ENCODE measurements at regions of chr3 and their contacts with region 1.

Region 1: DNA sequence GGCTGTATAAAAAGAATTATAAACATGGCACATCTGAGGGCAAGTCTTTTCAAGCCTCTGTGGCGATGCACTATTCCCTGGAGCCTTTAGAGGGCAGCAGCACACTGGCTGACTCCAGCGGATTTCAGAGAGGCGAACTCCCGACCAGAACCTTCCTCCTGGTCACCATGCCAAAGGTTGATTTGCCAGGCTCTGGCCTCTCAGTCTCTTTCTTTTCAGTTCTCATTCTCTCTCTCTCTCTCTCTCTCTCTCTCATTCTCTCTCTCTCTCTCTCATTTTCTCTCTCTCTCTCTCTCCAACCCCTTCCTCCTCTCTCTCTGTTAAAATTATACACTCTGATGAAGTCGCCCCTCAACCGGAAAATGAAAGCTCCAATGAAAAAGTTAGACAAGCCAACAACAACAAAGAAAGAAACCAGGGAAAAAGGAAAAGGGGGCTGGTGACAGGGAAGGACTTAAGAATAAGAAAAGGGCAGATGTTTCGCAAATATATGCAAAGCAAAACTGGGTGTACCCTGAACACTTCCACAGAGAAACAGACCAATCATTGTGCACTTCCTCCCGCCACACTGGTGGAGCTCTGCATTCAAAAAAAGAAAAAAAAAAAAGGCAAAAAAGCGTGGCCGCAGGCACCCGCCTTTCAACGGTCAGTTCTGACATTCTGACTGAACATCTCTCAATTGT is 90.2 kb downstream of the TIGIT start:
- DNase-seq: peak; percentile 25
- ATAC-seq: peak; percentile 99
- H3K4me3 ChIP-seq: no peak overlapping the region
- H3K27ac ChIP-seq: no peak overlapping the region
- H3K4me1 ChIP-seq: 0 out of 2 replicates have a peak, but pooled peaks cover under 1% of the 10 kb centered on the region
- H3K27me3 ChIP-seq: no peaks in the 10 kb centered on the region
- CTCF ChIP-seq: peak; percentile 93 to 95 (median 93)
- EP300 ChIP-seq: no peak
- POLR2A ChIP-seq: no peak
- RAD21 ChIP-seq: peak; percentile 98

Region 2: DNA sequence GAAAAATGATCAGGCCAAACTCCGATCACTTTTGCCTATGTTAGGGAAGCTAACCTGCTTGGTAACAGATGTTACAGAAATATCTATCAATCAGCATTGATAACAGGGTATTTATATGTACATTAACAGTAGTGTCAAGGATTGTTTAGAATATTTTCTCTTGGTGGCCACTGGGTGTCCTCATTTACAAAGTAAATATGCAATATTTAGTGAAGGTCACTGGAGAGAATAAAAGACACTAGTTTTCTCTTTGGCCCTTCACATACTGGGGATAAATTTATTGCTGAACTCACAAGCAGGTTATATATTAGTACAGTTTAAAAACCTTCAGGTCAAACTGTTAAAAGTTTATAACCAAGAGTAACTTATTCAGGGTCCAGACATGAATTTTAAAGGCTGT is 21.2 kb before region 1 on chr3:
- CTCF ChIA-PET with region 1: interaction called, 4 read pairs
- POLR2A ChIA-PET with region 1: no interaction called
- RAD21 ChIA-PET with region 1: no interaction called
- SMC1A ChIA-PET with region 1: interaction called, 14 read pairs
- in situ Hi-C with region 1: no loop called
- intact Hi-C with region 1: no loop called
- DNase-seq: no peak
- ATAC-seq: peak; percentile 87
- H3K4me3 ChIP-seq: no peak overlapping the region
- H3K27ac ChIP-seq: no peak overlapping the region
- H3K4me1 ChIP-seq: no peaks in the 10 kb centered on the region
- H3K27me3 ChIP-seq: no peaks in the 10 kb centered on the region
- CTCF ChIP-seq: peak in 2 of 3 experiments; percentile 37 to 51; a peak in 4 of 6 replicates
- EP300 ChIP-seq: no peak
- POLR2A ChIP-seq: no peak
- RAD21 ChIP-seq: peak; percentile 57

Region 3: GRCh38 chr3:114418724-114419543 is 34.9 kb after region 1 on chr3:
- CTCF ChIA-PET with region 1: interaction called, 223 read pairs
- POLR2A ChIA-PET with region 1: interaction called, 3 read pairs
- RAD21 ChIA-PET with region 1: interaction called, 38 read pairs
- SMC1A ChIA-PET with region 1: interaction called, 75 read pairs
- in situ Hi-C with region 1: no loop called
- intact Hi-C with region 1: loop called (anchors 1 kb)
- DNase-seq: no peak
- ATAC-seq: peak; percentile 96
- H3K4me3 ChIP-seq: no peak overlapping the region
- H3K27ac ChIP-seq: no peak overlapping the region; the same call in 1 of the 2 replicates
- H3K4me1 ChIP-seq: peaks cover 9% of the 10 kb centered on the region
- H3K27me3 ChIP-seq: no peaks in the 10 kb centered on the region
- CTCF ChIP-seq: peak; percentile 68 to 76 (median 75)
- EP300 ChIP-seq: no peak
- POLR2A ChIP-seq: no peak
- RAD21 ChIP-seq: peak; percentile 86

Region 4: GRCh38 chr3:114447545-114447944 is 63.5 kb after region 1 on chr3:
- CTCF ChIA-PET with region 1: interaction called, 11 read pairs
- POLR2A ChIA-PET with region 1: no interaction called
- RAD21 ChIA-PET with region 1: interaction called, 3 read pairs
- SMC1A ChIA-PET with region 1: interaction called, 3 read pairs
- in situ Hi-C with region 1: no loop called
- intact Hi-C with region 1: no loop called
- DNase-seq: no peak
- ATAC-seq: peak; percentile 54
- H3K4me3 ChIP-seq: peak overlapping the region; percentile 58
- H3K27ac ChIP-seq: peak overlapping the region; percentile 93
- H3K4me1 ChIP-seq: peaks cover 5% of the 10 kb centered on the region
- H3K27me3 ChIP-seq: no peaks in the 10 kb centered on the region
- CTCF ChIP-seq: peak in 2 of 3 experiments; percentile 40; a peak in 4 of 6 replicates
- EP300 ChIP-seq: no peak
- POLR2A ChIP-seq: no peak
- RAD21 ChIP-seq: peak; percentile 32; the same call in 1 of the 2 replicates

Region 5: GRCh38 chr3:114527036-114527644 is 143.1 kb after region 1 on chr3:
- CTCF ChIA-PET with region 1: no interaction called
- POLR2A ChIA-PET with region 1: no interaction called
- RAD21 ChIA-PET with region 1: no interaction called
- SMC1A ChIA-PET with region 1: no interaction called
- in situ Hi-C with region 1: no loop called
- intact Hi-C with region 1: loop called (anchors 10 kb)
- DNase-seq: no peak
- ATAC-seq: peak; percentile 70
- H3K4me3 ChIP-seq: no peak overlapping the region
- H3K27ac ChIP-seq: no peak overlapping the region
- H3K4me1 ChIP-seq: no peaks in the 10 kb centered on the region
- H3K27me3 ChIP-seq: no peaks in the 10 kb centered on the region
- CTCF ChIP-seq: peak; percentile 39 to 65 (median 57); a peak in 5 of 6 replicates
- EP300 ChIP-seq: no peak
- POLR2A ChIP-seq: no peak
- RAD21 ChIP-seq: peak; percentile 61

Region 6: GRCh38 chr3:114809668-114810413 is 425.8 kb after region 1 on chr3:
- CTCF ChIA-PET with region 1: no interaction called
- POLR2A ChIA-PET with region 1: no interaction called
- RAD21 ChIA-PET with region 1: no interaction called
- SMC1A ChIA-PET with region 1: no interaction called
- in situ Hi-C with region 1: no loop called
- intact Hi-C with region 1: loop called (anchors 5 kb)
- DNase-seq: peak; percentile 79
- ATAC-seq: peak; percentile 99
- H3K4me3 ChIP-seq: peak overlapping the region; percentile 31; the same call in 1 of the 2 replicates
- H3K27ac ChIP-seq: peak overlapping the region; percentile 45
- H3K4me1 ChIP-seq: peaks cover 6% of the 10 kb centered on the region
- H3K27me3 ChIP-seq: no peaks in the 10 kb centered on the region
- CTCF ChIP-seq: no peak
- EP300 ChIP-seq: peak in 1 of 2 experiments; percentile 74; a peak in 2 of 4 replicates
- POLR2A ChIP-seq: no peak
- RAD21 ChIP-seq: no peak

Region 7: GRCh38 chr3:115092220-115092791 is 708.3 kb after region 1 on chr3:
- CTCF ChIA-PET with region 1: no interaction called
- POLR2A ChIA-PET with region 1: no interaction called
- RAD21 ChIA-PET with region 1: no interaction called
- SMC1A ChIA-PET with region 1: no interaction called
- in situ Hi-C with region 1: no loop called
- intact Hi-C with region 1: loop called (anchors 5 kb)
- DNase-seq: peak; percentile 26
- ATAC-seq: peak; percentile 81
- H3K4me3 ChIP-seq: no peak overlapping the region
- H3K27ac ChIP-seq: no peak overlapping the region
- H3K4me1 ChIP-seq: no peaks in the 10 kb centered on the region
- H3K27me3 ChIP-seq: no peaks in the 10 kb centered on the region
- CTCF ChIP-seq: peak; percentile 78 to 82 (median 78)
- EP300 ChIP-seq: no peak
- POLR2A ChIP-seq: no peak
- RAD21 ChIP-seq: peak; percentile 93

Measured in GM12878 (cell line).